A673 (cell line): ENCODE measurements at regions of chr1 and their contacts with region 1.

Region 1: GRCh38 chr1:28893403-28894102 is 20.8 kb upstream of the EPB41 start:
- DNase-seq: peak; percentile 80
- H3K4me3 ChIP-seq: no peak overlapping the region
- H3K27ac ChIP-seq: peak overlapping the region; percentile 64
- H3K4me1 ChIP-seq: peaks cover 63% of the 10 kb centered on the region
- H3K27me3 ChIP-seq: no peaks in the 10 kb centered on the region
- CTCF ChIP-seq: peak; percentile 61

Region 2: GRCh38 chr1:28592321-28593071 is 301.1 kb before region 1 on chr1:
- CTCF ChIA-PET with region 1: interaction called, 11 read pairs
- POLR2A ChIA-PET with region 1: no interaction called
- intact Hi-C with region 1: no loop called
- DNase-seq: peak; percentile 26
- H3K4me3 ChIP-seq: peak overlapping the region; percentile 55
- H3K27ac ChIP-seq: no peak overlapping the region
- H3K4me1 ChIP-seq: peaks cover 10% of the 10 kb centered on the region
- H3K27me3 ChIP-seq: no peaks in the 10 kb centered on the region
- CTCF ChIP-seq: no peak

Region 3: GRCh38 chr1:29033829-29034466 is 140.4 kb after region 1 on chr1:
- CTCF ChIA-PET with region 1: interaction called, 12 read pairs
- POLR2A ChIA-PET with region 1: no interaction called
- intact Hi-C with region 1: no loop called
- DNase-seq: peak; percentile 70
- H3K4me3 ChIP-seq: no peak overlapping the region
- H3K27ac ChIP-seq: no peak overlapping the region
- H3K4me1 ChIP-seq: peaks cover 50% of the 10 kb centered on the region
- H3K27me3 ChIP-seq: no peaks in the 10 kb centered on the region
- CTCF ChIP-seq: peak; percentile 69

Region 4: DNA sequence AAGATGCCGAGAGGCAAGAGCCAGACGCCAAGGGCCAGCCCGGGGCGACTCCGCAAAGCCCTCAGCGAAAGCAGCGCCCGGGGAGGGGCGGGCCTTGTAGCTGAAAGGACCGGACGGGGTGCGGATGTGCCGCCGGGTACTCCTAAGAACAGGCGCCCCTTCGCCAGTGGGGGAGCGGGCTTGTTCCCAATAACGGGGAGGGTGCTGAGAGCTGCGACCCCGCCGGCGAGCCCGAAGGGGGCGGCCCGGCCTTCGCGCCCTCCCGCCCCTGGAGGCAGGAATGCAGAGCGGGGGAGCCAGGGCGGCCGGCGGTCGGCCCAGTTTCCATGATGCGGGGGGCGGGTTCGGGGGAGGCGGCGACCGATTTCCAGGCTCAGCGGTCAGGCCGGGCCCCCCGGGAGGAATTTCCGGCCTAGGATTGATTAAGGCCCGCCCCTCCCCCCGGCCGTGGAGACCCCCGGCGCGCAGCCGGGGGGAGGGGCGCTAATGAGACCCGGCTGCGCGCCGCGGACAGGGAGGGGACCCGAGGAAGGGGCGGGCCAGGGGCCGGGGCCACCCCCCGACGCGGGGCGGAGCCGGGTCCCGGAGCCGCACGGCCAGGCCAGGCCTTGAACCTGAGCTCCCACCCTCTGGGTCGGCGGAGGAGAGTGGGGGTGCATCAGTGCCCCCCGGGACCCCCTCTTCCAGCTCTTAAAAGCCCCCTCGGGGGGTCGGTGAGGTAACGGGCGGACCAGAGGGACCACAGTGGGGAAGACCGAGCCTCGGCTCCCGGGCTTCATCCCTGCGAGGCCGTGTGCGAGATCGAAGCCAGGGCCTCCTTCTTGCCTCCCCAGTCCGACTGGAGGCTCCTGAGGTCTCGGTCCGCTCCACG is 231.0 kb after region 1 on chr1:
- CTCF ChIA-PET with region 1: no interaction called
- POLR2A ChIA-PET with region 1: no interaction called
- intact Hi-C with region 1: loop called (anchors 5 kb)
- DNase-seq: peak; percentile 81
- H3K4me3 ChIP-seq: peak overlapping the region; percentile 58
- H3K27ac ChIP-seq: peak overlapping the region; percentile 72
- H3K4me1 ChIP-seq: peaks cover 9% of the 10 kb centered on the region
- H3K27me3 ChIP-seq: no peaks in the 10 kb centered on the region
- CTCF ChIP-seq: peak; percentile 56